ENCODE measurements at regions of chr9 and their contacts with region 1.

Region 1: DNA sequence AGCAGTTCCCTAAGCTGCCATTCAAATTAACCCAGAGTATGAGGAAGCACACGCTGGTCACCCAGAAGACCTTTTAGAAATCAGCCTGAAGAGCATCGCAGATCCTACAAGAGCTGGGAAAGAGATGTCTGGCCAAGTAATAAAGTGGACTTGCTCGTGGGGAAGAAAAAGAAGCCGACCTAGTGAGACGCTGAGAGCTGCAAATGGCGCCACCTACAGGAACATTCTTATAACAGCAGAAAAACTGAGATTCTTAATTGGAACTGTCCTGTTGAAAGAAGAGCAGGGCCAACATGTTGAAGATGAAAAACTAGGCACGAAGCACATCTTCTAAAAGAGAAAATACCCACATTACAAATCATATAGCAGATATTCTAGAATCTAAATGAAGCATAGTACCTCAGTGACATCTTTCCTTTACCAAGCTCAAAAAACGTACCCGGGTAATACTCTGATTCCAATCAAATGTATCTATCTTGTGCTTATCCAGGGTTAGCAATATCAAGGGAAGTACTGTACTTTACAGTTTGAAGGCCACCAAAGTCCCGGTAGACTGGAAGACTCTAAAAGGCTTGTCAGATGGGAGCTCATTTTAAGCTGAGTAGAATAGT is 3.9 kb upstream of the GNAQ start:
- DNase-seq: peak; percentile 69
- H3K4me3 Mint-ChIP-seq: peak overlapping the region; percentile 34
- H3K27ac Mint-ChIP-seq: no peak overlapping the region
- H3K4me1 Mint-ChIP-seq: peaks cover 28% of the 10 kb centered on the region
- H3K27me3 Mint-ChIP-seq: no peaks in the 10 kb centered on the region

Region 2: GRCh38 chr9:77475641-77476473 is 559.6 kb before region 1 on chr9:
- CTCF ChIA-PET with region 1: interaction called, 4 read pairs
- intact Hi-C with region 1: loop called (anchors 2 kb)
- DNase-seq: peak; percentile 87
- H3K4me3 Mint-ChIP-seq: no peak overlapping the region
- H3K27ac Mint-ChIP-seq: peak overlapping the region; percentile 91
- H3K4me1 Mint-ChIP-seq: peaks cover 27% of the 10 kb centered on the region
- H3K27me3 Mint-ChIP-seq: no peaks in the 10 kb centered on the region

Region 3: GRCh38 chr9:77751341-77752091 is 284.0 kb before region 1 on chr9:
- CTCF ChIA-PET with region 1: interaction called, 11 read pairs
- intact Hi-C with region 1: loop called (anchors 2 kb)
- DNase-seq: peak; percentile 26
- H3K4me3 Mint-ChIP-seq: no peak overlapping the region
- H3K27ac Mint-ChIP-seq: no peak overlapping the region
- H3K4me1 Mint-ChIP-seq: peaks cover 34% of the 10 kb centered on the region
- H3K27me3 Mint-ChIP-seq: no peaks in the 10 kb centered on the region

Region 4: GRCh38 chr9:77944556-77945243 is 90.8 kb before region 1 on chr9:
- CTCF ChIA-PET with region 1: interaction called, 7 read pairs
- intact Hi-C with region 1: loop called (anchors 1 kb)
- DNase-seq: peak; percentile 38
- H3K4me3 Mint-ChIP-seq: peak overlapping the region; percentile 32
- H3K27ac Mint-ChIP-seq: peak overlapping the region; percentile 67
- H3K4me1 Mint-ChIP-seq: peaks cover 51% of the 10 kb centered on the region
- H3K27me3 Mint-ChIP-seq: no peaks in the 10 kb centered on the region

Region 5: DNA sequence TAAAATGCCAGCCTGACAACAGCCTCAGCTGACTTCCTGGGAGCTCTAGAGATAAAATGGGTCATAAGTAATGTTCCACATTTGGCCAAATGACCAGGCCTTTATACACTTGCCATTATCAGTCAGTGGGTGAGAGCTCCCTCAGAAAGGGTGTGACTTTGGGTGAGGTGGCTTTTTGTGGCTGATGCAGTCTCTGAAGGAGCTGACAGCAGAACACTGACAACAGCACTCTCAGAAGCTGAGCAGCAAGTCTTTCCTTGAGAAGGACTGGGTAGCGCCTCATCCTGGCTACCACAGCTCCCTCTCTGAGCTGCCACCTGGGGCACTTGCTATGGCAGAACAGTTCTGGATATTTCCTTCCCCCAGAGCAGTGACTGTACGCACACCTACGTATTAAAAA is 18.1 kb after region 1 on chr9:
- CTCF ChIA-PET with region 1: interaction called, 30 read pairs
- intact Hi-C with region 1: no loop called
- DNase-seq: no peak
- H3K4me3 Mint-ChIP-seq: no peak overlapping the region
- H3K27ac Mint-ChIP-seq: no peak overlapping the region
- H3K4me1 Mint-ChIP-seq: peaks cover 18% of the 10 kb centered on the region
- H3K27me3 Mint-ChIP-seq: no peaks in the 10 kb centered on the region

Region 6: DNA sequence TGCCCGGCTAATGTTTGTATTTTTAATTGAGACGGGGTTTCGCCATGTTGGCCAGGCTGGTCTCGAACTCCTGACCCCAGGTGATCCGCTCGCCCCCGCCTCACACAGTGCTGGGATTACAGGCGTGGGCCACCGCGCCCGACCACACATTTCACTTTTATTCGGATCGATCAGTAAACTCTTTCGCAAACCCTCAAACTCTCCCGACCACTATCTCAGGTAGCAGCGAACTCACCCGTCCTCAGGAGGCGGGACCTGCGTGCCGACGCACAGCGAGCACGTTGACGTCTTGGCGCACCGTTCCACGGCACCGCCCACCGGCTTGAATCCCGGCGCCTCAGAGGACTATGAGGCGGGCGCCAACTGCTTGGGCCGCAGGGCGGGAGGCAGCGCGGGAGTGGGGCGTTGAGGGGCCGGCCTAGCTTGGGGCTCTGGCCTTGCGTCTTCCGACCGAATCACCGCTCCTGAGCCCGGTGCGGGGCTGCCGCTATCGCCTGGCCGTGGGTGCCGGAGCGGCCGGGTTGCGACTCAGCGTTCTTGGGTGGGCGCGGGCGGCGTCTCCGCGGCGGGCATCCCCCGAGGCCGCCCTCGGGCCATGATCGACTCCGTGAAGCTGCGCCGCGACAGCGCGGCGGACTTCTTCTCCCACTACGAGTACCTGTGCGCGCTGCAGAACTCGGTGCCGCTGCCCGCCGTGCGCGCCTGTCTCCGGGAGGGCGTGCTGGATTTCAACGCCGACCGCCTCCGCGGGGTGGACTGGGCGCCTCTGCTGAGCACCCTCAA is 200.5 kb after region 1 on chr9 and contains the start of gene CEP78:
- CTCF ChIA-PET with region 1: no interaction called
- intact Hi-C with region 1: loop called (anchors 2 kb)
- DNase-seq: peak; percentile 91
- H3K4me3 Mint-ChIP-seq: peak within 1 kb of the TSS; percentile 96
- H3K27ac Mint-ChIP-seq: peak within 1 kb of the TSS; percentile 91
- H3K4me1 Mint-ChIP-seq: peaks cover 34% of the 10 kb centered on the region
- H3K27me3 Mint-ChIP-seq: no peaks in the 10 kb centered on the region
- total RNA-seq, gene CEP78: 39.5 to 39.7 TPM